Endothelial cell of umbilical vein (primary cell): ENCODE measurements at regions of chr2 and their contacts with region 1.

Region 1: DNA sequence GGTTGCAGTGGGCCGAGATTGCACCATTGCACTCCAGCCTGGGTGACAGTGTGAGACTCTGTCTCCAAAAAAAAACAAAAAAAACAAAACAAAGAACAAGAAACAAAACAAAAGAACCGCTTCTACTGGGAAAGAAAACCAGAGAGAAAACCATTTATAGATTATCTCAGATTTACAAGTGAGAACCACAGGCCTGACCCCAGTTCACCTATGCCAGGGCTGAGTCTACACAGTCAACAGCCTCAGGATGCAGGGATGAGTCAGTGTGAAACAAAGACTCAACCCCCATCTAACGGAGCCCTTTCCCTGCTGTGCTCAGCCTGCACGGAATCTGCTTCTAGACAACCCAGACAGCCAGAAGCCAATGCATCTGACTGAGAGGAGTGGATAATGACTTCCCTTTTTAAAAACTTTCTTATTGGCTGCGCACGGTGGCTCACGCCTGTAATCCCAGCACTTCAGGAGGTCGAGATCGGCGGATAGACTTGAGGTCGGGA is 25.5 kb upstream of the YWHAQ start:
- DNase-seq: peak; percentile 91
- H3K4me3 ChIP-seq: no peak overlapping the region
- H3K27ac ChIP-seq: peak overlapping the region; percentile 60
- H3K4me1 ChIP-seq: peaks cover 22% of the 10 kb centered on the region
- H3K27me3 ChIP-seq: no peaks in the 10 kb centered on the region
- CTCF ChIP-seq: no peak
- POLR2A ChIP-seq: peak; percentile 45

Region 2: GRCh38 chr2:8754106-8754776 is 902.1 kb before region 1 on chr2:
- CTCF ChIA-PET with region 1: no interaction called
- POLR2A ChIA-PET with region 1: no interaction called
- dilution Hi-C with region 1: no loop called
- intact Hi-C with region 1: no loop called
- DNase-seq: no peak
- H3K4me3 ChIP-seq: no peak overlapping the region
- H3K27ac ChIP-seq: no peak overlapping the region
- H3K4me1 ChIP-seq: no peaks in the 10 kb centered on the region
- H3K27me3 ChIP-seq: no peaks in the 10 kb centered on the region
- CTCF ChIP-seq: no peak
- POLR2A ChIP-seq: no peak

Region 3: DNA sequence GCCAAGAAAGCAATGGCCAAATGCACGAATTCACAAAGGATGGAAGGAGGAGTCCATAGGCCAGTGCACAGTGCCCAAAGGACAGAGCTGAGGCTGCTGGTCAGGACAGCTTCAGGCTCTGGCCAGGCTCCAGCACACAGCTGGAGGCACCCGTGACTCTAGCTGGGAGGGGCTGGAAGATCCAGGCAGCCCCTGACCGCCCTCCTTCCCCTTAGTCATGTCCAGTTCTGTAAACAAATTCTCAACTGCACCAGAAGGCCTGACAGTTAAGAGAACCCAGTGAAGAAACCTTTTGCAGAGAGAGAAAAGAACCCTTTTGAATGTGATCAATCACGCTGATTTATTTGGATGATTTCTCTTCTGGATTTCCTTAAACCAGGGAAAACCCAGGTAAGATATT is 17.8 kb before region 1 on chr2:
- CTCF ChIA-PET with region 1: interaction called, 3 read pairs
- POLR2A ChIA-PET with region 1: no interaction called
- dilution Hi-C with region 1: no loop called
- intact Hi-C with region 1: loop called (anchors 2 kb)
- DNase-seq: peak; percentile 79
- H3K4me3 ChIP-seq: no peak overlapping the region
- H3K27ac ChIP-seq: no peak overlapping the region
- H3K4me1 ChIP-seq: peaks cover 19% of the 10 kb centered on the region
- H3K27me3 ChIP-seq: peaks cover 0 to 2% of the 10 kb centered on the region in 2 experiments
- CTCF ChIP-seq: no peak
- POLR2A ChIP-seq: no peak